ENCODE measurements at regions of chr5 and their contacts with region 1.

Region 1: DNA sequence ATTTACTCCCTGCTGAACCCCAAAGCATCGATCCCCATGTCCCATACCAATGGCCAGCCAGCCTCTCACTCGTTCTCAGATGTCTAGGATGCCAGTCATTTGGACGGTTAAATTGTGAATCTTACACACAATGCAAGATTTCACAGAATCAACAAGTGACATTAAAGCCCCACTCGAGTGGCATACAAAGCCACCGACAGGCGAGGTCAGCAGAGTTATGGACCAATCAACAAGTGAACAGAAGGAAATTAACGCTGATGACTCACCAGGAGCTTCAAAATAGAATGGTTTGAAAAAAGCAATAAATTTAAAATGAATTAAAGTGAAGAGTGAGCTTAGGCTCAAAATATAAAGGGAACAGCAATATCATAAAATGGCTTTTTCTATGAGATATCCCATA is 8.2 kb upstream of the RUFY1 start:
- DNase-seq: no peak
- ATAC-seq: no peak
- H3K4me3 ChIP-seq: no peak overlapping the region
- H3K27ac ChIP-seq: no peak overlapping the region
- H3K4me1 ChIP-seq: 0 out of 2 replicates have a peak, but pooled peaks cover 2% of the 10 kb centered on the region
- H3K27me3 ChIP-seq: no peaks in the 10 kb centered on the region
- CTCF ChIP-seq: no peak
- POLR2A ChIP-seq: no peak
- RAD21 ChIP-seq: no peak

Region 2: DNA sequence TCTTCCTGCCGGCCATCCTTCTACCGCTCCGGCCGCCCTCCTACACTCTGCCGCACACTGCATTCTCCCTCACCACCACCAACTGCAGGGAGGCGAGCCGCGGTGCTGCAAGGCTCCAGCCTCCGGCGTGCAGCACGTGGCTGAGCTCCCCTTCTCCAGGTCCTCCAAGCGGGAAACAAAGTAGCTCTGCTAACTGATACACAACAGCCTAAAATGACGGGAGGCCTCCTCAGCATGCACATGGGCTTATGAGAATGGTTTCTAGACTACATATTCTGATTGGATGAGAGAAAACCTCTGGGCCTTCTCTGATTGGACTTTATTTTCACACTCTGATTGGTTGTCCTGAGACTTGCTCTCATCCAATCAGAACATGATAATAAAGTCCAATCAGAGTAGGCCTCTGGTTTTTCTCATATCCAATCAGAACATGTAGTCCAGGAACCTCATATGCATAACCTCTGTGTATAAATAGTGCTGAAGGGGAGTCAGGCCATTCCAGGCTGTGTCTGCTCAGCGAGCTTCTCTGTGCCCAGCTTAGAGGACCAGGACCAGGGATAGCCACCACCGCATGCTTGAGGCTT is 709.5 kb before region 1 on chr5:
- CTCF ChIA-PET with region 1: no interaction called
- POLR2A ChIA-PET with region 1: no interaction called
- dilution Hi-C with region 1: no loop called
- in situ Hi-C with region 1: no loop called
- intact Hi-C with region 1: no loop called
- DNase-seq: no peak
- ATAC-seq: no peak
- H3K4me3 ChIP-seq: no peak overlapping the region
- H3K27ac ChIP-seq: no peak overlapping the region
- H3K4me1 ChIP-seq: no peaks in the 10 kb centered on the region
- H3K27me3 ChIP-seq: no peaks in the 10 kb centered on the region
- CTCF ChIP-seq: no peak
- POLR2A ChIP-seq: no peak
- RAD21 ChIP-seq: no peak

Region 3: GRCh38 chr5:179176571-179177230 is 365.5 kb before region 1 on chr5:
- CTCF ChIA-PET with region 1: no interaction called
- POLR2A ChIA-PET with region 1: interaction called, 11 read pairs
- dilution Hi-C with region 1: no loop called
- in situ Hi-C with region 1: no loop called
- intact Hi-C with region 1: no loop called
- DNase-seq: no peak
- ATAC-seq: no peak
- H3K4me3 ChIP-seq: no peak overlapping the region
- H3K27ac ChIP-seq: no peak overlapping the region
- H3K4me1 ChIP-seq: no peaks in the 10 kb centered on the region
- H3K27me3 ChIP-seq: no peaks in the 10 kb centered on the region
- CTCF ChIP-seq: no peak
- POLR2A ChIP-seq: no peak
- RAD21 ChIP-seq: no peak

Measured in IMR-90 (cell line).